ENCODE measurements at regions of chr4 and their contacts with region 1.

Region 1: GRCh38 chr4:13067077-13067476 is 417.1 kb downstream of the RAB28 start:
- DNase-seq: no peak
- H3K4me3 ChIP-seq: no peak overlapping the region
- H3K27ac ChIP-seq: no peak overlapping the region
- H3K4me1 ChIP-seq: no peaks in the 10 kb centered on the region
- H3K27me3 ChIP-seq: no peaks in the 10 kb centered on the region
- CTCF ChIP-seq: no peak
- POLR2A ChIP-seq: no peak

Region 2: DNA sequence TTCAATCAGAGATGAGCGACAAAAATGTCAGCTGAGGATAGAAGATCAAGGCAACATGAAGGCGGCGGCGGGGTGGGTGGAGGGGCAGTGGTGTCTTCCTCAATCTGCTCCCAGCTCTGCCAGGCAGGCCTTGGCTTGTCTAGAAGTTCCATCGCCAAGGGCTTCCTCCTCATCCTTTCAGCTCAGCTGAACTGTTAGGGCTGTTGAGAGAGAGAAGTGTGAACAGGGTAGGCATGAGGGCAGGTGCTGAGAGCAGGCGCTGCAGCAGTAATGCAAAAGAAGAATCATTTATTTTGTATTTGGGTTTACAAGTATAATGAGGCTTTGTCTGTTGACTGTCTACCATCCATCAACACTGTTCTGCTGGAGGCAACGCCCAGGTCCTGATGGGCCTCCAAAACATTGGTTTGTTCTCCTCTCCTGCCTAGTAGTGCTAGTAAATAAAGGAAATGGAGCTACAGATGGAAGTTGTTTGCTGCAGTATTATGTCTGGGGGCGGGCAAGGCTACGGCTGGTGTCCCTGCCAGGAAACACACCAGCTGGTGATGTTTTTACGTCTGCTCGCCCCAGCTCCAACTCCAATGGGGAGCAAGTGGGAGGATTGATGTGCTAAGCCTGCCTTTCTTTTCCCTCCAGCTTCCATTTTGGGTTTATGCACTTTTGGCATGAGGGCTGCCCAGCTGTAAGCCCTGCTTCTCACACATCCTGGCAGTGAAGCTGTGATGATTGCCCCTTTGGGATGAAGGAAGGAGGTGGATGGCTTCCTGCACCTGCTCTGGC is 699.9 kb after region 1 on chr4:
- CTCF ChIA-PET with region 1: no interaction called
- POLR2A ChIA-PET with region 1: no interaction called
- dilution Hi-C with region 1: no loop called
- intact Hi-C with region 1: loop called (anchors 5 kb)
- DNase-seq: no peak
- H3K4me3 ChIP-seq: no peak overlapping the region
- H3K27ac ChIP-seq: no peak overlapping the region
- H3K4me1 ChIP-seq: no peaks in the 10 kb centered on the region
- H3K27me3 ChIP-seq: no peaks in the 10 kb centered on the region
- CTCF ChIP-seq: no peak
- POLR2A ChIP-seq: no peak

Measured in endothelial cell of umbilical vein (primary cell).